SK-N-SH (cell line): ENCODE measurements at regions of chr16 and their contacts with region 1.

Region 1: GRCh38 chr16:30534368-30535105 is at the start of gene ZNF747:
- DNase-seq: peak; percentile 95
- H3K4me3 ChIP-seq: peak within 1 kb of the TSS; percentile 65 to 68
- H3K27ac ChIP-seq: peak within 1 kb of the TSS; percentile 81 to 91
- H3K4me1 ChIP-seq: peaks cover 8 to 17% of the 10 kb centered on the region in 2 experiments; a peak in 3 of 4 replicates
- H3K27me3 ChIP-seq: no peaks in the 10 kb centered on the region
- CTCF ChIP-seq: 0 out of 2 replicates have a peak, but pooled peaks have one; percentile 7
- EP300 ChIP-seq: peak in 1 of 2 experiments; percentile 26; a peak in 1 of 4 replicates
- RAD21 ChIP-seq: no peak
- polyA plus RNA-seq, gene ZNF747: 5.6 and 5.8 TPM in 2 replicates

Region 2: DNA sequence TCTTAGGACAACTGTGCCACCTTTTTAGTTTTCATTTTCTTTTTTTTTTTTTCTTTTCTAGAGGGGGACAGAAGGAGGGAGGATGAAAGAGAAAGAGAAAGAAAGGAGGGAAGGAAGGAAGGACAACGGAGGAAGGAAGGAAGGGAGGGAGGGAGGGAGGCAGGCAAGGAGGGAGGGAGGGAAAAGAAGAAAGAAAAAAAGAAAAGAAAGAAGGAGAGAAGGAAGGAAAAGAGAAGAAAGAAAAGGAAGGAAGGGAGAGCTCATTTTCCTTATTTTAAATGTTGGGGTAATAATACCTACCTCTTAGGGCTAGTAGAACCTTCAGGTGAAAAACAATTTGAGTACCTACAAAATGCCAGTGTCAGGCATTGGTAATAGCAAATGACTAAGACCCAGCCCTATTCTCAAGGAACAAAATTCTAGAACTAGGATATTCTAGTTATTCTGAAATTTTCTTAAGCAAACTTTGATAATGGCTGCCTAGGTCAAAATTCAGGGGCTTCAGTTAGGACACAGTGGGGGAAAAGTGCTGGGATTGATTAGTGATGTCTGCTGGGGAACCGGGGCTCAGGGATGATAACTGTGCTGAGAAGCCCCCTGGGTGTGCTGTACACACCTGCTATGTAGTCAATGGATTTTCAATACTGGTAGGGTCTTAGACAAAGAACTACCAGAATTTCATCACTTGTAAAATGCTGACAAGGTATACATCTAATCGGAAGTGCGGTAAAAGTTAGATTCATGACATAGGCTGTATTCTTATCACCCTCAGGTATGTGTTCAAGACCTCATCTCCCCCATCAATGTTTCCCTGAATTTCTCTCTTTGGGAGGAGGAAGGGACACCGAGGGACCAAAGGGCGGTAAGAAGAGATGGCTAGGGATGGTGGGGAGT is 30.9 kb before region 1 on chr16:
- CTCF ChIA-PET with region 1: no interaction called
- POLR2A ChIA-PET with region 1: no interaction called
- DNase-seq: no peak
- H3K4me3 ChIP-seq: no peak overlapping the region
- H3K27ac ChIP-seq: no peak overlapping the region
- H3K4me1 ChIP-seq: no peaks in the 10 kb centered on the region
- H3K27me3 ChIP-seq: no peaks in the 10 kb centered on the region; the same call in 1 of the 2 replicates
- CTCF ChIP-seq: no peak
- EP300 ChIP-seq: no peak
- RAD21 ChIP-seq: no peak

Region 3: DNA sequence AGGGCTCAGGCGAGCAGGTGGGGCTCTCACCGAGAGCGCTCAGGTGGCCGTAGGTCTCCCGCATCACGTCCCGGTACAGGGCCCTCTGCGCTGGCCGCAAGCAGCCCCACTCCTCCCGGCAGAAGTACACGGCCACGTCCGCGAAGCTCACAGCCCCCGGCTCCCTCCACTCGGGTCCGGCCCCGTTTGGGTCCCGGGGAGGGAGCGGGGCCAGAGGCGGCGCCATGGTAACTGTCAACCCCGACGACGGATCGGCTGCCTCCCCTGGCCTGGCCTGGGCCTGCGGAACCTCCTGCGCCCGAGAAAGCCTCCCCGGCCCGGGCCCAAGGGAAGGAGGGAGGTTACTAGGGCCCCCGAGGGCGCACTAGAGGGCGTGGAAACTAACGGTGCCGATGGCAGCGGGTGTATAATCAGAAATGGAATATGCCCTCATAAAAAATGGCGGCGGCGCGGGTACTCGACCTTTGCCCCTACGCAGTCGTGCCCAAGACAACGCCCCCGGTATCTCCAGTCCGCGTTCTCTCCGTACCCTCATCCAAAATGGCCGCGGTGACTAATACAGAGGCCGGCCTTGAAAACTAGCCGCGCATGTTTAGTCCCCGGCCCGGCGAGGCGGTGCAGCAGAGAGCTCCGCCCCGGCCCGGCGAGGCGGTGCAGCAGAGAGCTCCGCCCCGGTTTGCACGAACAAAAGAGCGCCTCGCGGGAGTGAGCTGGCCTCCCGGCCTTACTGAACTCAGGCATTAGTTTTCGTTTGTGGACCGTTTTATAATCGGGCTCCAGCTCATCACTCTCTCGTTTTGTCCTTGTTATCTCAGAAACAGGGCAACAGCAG is 23.6 kb after region 1 on chr16 and contains the start of gene ZNF764:
- CTCF ChIA-PET with region 1: interaction called, 19 read pairs
- POLR2A ChIA-PET with region 1: interaction called, 47 read pairs
- DNase-seq: peak; percentile 96
- H3K4me3 ChIP-seq: peak within 1 kb of the TSS; percentile 75 to 91
- H3K27ac ChIP-seq: peak within 1 kb of the TSS; percentile 88 to 92
- H3K4me1 ChIP-seq: peaks cover 0 to 6% of the 10 kb centered on the region in 2 experiments; a peak in 1 of 4 replicates
- H3K27me3 ChIP-seq: no peaks in the 10 kb centered on the region
- CTCF ChIP-seq: no peak
- EP300 ChIP-seq: no peak
- RAD21 ChIP-seq: peak; percentile 1; the same call in 1 of the 2 replicates
- polyA plus RNA-seq, gene ZNF764: 2.8 and 3.4 TPM in 2 replicates

Region 4: GRCh38 chr16:30602616-30603277 is 68.2 kb after region 1 on chr16:
- CTCF ChIA-PET with region 1: interaction called, 10 read pairs
- POLR2A ChIA-PET with region 1: no interaction called
- DNase-seq: no peak
- H3K4me3 ChIP-seq: no peak overlapping the region
- H3K27ac ChIP-seq: no peak overlapping the region
- H3K4me1 ChIP-seq: no peaks in the 10 kb centered on the region
- H3K27me3 ChIP-seq: no peaks in the 10 kb centered on the region
- CTCF ChIP-seq: no peak
- EP300 ChIP-seq: no peak
- RAD21 ChIP-seq: no peak